ENCODE measurements at regions of chr2 and their contacts with region 1.

Region 1: GRCh38 chr2:13876491-13877037 is 756.0 kb upstream of the LRATD1 start:
- DNase-seq: peak in 1 of 2 donors; percentile 3
- ATAC-seq: peak in 7 of 8 donors; percentile 29 to 95 (median 84)
- H3K4me3 ChIP-seq: peak overlapping the region in 1 of 10 donors; percentile 20
- H3K27ac ChIP-seq: peak overlapping the region in 9 of 10 donors; percentile 13 to 75 (median 63)
- H3K4me1 ChIP-seq: no peaks in the 10 kb centered on the region
- H3K27me3 ChIP-seq: no peaks in the 10 kb centered on the region
- CTCF ChIP-seq: no peak

Region 2: GRCh38 chr2:13821255-13821880 is 55.2 kb before region 1 on chr2:
- intact Hi-C with region 1: loop called in 1 of 10 experiments (anchors 5 kb)
- DNase-seq: no peak
- ATAC-seq: no peak
- H3K4me3 ChIP-seq: no peak overlapping the region
- H3K27ac ChIP-seq: no peak overlapping the region
- H3K4me1 ChIP-seq: no peaks in the 10 kb centered on the region
- H3K27me3 ChIP-seq: no peaks in the 10 kb centered on the region
- CTCF ChIP-seq: no peak

Measured in heart right ventricle (tissue), 16 donors.